T-cell (primary cell): ENCODE measurements at regions of chr2 and their contacts with region 1.

Region 1: GRCh38 chr2:171824086-171824485 is 70.0 kb downstream of the SLC25A12 start:
- DNase-seq: no peak
- ATAC-seq: no peak
- H3K4me3 ChIP-seq: no peak overlapping the region
- H3K4me3 Mint-ChIP-seq: no peak overlapping the region
- H3K27ac ChIP-seq: no peak overlapping the region
- H3K27ac Mint-ChIP-seq: no peak overlapping the region
- H3K4me1 ChIP-seq: no peaks in the 10 kb centered on the region
- H3K4me1 Mint-ChIP-seq: no peaks in the 10 kb centered on the region
- H3K27me3 ChIP-seq: no peaks in the 10 kb centered on the region
- H3K27me3 Mint-ChIP-seq: no peaks in the 10 kb centered on the region

Region 2: DNA sequence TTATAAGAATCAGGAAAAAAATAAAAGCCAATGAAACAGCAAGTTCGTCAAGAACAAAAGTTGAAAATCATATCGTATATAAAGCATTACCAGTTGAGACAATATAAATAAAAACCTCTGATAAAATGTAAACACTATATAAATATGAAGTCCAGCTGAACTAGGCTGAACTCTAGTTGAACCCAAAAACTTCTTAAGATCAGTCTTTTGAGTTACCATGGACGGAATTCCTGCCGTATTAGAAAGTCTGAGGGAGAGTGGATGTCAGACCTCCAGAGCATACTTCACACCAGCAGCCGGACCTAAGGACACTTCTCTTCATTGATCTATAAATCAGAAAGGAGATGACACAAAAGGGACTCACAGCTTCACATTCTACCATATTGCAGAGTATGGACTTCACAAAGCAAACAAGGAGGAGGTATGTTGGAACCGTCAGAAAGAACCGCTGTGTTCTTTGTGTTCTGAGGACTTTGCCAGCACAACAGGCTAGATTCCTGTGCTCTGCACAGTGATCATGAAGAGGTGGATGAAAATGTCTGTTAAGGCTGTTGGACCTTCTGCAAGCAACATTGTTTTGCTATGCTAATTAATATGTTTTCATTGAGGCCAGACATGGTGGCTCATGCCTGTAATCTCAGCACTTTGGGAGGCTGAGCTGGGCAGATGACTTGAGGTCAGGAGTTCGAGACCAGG is 1176.2 kb before region 1 on chr2:
- CTCF ChIA-PET with region 1: no interaction called
- POLR2A ChIA-PET with region 1: no interaction called
- DNase-seq: no peak
- ATAC-seq: no peak
- H3K4me3 ChIP-seq: no peak overlapping the region
- H3K4me3 Mint-ChIP-seq: no peak overlapping the region
- H3K27ac ChIP-seq: no peak overlapping the region
- H3K27ac Mint-ChIP-seq: no peak overlapping the region
- H3K4me1 ChIP-seq: peaks cover 16 to 18% of the 10 kb centered on the region in 2 experiments
- H3K4me1 Mint-ChIP-seq: peaks cover 24% of the 10 kb centered on the region in 3 donors
- H3K27me3 ChIP-seq: no peaks in the 10 kb centered on the region
- H3K27me3 Mint-ChIP-seq: peaks cover 2 to 4% of the 10 kb centered on the region in 2 donors

Region 3: GRCh38 chr2:171652416-171652785 is 171.7 kb before region 1 on chr2:
- CTCF ChIA-PET with region 1: no interaction called
- POLR2A ChIA-PET with region 1: no interaction called
- DNase-seq: no peak
- ATAC-seq: no peak
- H3K4me3 ChIP-seq: no peak overlapping the region
- H3K4me3 Mint-ChIP-seq: no peak overlapping the region
- H3K27ac ChIP-seq: no peak overlapping the region
- H3K27ac Mint-ChIP-seq: no peak overlapping the region
- H3K4me1 ChIP-seq: no peaks in the 10 kb centered on the region
- H3K4me1 Mint-ChIP-seq: no peaks in the 10 kb centered on the region
- H3K27me3 ChIP-seq: peaks cover 0 to 14% of the 10 kb centered on the region in 2 experiments
- H3K27me3 Mint-ChIP-seq: peaks cover 38 to 48% of the 10 kb centered on the region in 2 donors

Region 4: DNA sequence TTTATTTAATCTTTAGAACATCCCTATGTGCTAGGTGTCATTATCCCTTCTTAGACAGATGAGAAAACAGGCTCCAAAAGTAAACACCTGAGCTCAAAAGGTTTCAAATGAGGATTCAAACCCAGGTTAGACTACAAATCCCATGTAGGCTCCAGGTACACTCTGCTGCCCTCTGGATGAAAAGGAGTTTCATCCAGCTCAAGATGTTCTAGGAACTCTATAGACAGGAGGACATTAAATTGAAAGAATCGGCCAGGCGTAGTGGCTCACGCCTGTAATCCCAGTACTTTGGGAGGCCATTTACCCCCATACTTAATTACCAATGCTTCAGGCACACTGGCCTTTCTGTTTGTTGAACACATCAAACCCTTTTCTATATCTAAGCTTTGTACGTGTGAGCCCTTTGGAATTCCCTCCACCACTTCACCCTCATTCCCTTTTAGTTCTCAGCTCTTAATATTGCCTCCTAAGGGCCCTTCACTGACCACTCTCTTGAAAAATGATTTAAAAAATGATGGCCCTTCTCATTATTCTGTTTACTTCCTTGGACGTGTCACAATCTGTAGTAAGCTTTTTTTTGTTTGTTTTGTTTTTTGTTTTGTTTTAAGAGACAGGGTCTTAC is 59.3 kb after region 1 on chr2:
- CTCF ChIA-PET with region 1: no interaction called
- POLR2A ChIA-PET with region 1: interaction called in 1 of 2 experiments, 11 read pairs
- DNase-seq: no peak
- ATAC-seq: no peak
- H3K4me3 ChIP-seq: no peak overlapping the region
- H3K4me3 Mint-ChIP-seq: no peak overlapping the region
- H3K27ac ChIP-seq: no peak overlapping the region
- H3K27ac Mint-ChIP-seq: no peak overlapping the region
- H3K4me1 ChIP-seq: no peaks in the 10 kb centered on the region
- H3K4me1 Mint-ChIP-seq: peaks cover 21 to 35% (median 31%) of the 10 kb centered on the region in 3 donors
- H3K27me3 ChIP-seq: no peaks in the 10 kb centered on the region
- H3K27me3 Mint-ChIP-seq: no peaks in the 10 kb centered on the region

Region 5: DNA sequence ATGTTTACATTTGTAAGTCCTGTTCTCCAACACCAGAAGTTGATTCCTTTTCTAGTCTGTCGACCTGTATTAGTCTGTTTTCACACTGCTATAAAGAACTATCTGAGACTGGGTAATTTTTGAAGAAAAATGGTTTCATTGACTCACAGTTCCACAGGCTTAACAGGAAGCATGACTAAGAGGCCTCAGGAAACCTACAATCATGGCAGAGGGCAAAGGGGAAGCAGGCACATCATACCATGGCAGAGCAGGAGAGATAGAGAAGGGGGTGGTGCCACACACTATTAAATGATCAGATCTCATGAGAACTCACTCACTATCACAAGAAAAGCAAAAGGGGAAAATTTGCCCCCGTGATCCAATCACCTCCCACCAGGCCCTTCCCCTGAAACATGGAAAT is 1138.7 kb after region 1 on chr2:
- CTCF ChIA-PET with region 1: no interaction called
- POLR2A ChIA-PET with region 1: no interaction called
- DNase-seq: no peak
- ATAC-seq: peak in 2 of 4 experiments; percentile 31 to 59
- H3K4me3 ChIP-seq: no peak overlapping the region
- H3K4me3 Mint-ChIP-seq: no peak overlapping the region
- H3K27ac ChIP-seq: no peak overlapping the region
- H3K27ac Mint-ChIP-seq: no peak overlapping the region
- H3K4me1 ChIP-seq: peaks cover 0 to 2% of the 10 kb centered on the region in 2 experiments
- H3K4me1 Mint-ChIP-seq: peaks cover 0 to 5% (median 3%) of the 10 kb centered on the region in 3 donors
- H3K27me3 ChIP-seq: peaks cover 0 to 6% of the 10 kb centered on the region in 2 experiments
- H3K27me3 Mint-ChIP-seq: peaks cover 0 to 8% of the 10 kb centered on the region in 2 donors